ENCODE measurements at regions of chr5 and their contacts with region 1.

Region 1: DNA sequence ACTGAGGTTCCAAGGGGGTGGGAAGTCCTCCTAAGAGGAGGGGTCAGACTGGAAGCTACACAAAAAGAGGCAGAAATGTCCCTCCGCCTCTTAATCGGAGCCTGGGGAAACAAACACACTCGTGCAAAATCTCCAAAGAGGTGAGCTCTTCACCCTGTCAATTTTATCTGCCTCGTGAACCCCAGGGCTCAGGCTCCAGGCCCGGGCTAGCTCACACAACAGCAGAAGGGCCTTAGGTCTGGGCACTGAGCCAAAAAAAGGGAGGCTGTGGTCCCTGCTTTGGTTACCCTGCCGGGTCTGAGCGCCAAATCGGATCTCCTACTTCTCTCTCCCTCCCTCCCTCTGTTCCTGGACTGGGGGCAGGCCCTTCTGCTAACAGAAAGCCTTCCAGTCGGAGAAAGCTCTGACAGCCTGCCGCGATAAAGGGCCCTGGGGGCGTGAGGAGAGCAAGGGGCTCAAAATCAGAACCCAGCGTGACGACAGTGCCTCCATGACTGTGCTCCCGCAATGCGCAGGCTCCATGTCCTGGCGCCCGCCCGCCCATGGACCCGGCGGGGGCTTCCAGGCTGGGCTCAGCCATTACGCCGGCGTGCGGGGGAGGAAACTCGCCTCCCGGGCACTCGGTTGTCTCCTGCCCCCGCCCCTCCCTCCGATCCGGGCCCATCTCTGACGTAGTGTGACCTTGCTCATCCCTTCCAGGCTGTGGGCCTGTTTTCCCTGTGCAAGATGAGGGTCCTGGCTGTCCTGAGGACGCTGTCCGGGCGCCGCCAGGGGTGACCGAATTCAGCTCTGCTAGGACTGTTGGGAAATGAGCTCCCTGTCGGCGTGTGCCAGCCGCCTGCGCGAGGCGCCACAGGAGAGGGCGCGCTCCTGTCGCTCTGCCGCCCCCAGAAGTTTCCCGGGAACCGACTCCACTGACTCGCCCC is 865 bp upstream of the SLC22A4 start:
- DNase-seq: peak; percentile 76

Region 2: DNA sequence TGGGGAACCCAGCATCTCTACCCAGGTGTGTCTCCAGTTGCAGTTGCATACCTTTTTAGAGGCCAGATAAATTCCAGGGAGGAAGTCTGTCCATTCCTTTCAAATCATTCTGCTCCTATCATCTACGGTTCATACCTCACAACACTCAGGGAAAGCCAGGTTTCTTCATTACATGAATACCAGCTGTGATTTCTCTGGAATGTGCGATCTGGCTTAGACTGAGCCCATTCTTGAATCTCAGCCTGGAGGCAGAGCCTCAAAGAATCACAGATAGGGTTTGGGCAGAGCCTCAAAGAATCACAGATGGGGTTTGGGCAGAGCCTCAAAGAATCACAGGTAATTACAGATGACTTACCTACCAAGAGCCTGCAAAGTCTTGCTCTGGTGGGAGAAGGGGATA is 72.8 kb before region 1 on chr5:
- CTCF ChIA-PET with region 1: no interaction called
- POLR2A ChIA-PET with region 1: no interaction called
- DNase-seq: no peak

Region 3: DNA sequence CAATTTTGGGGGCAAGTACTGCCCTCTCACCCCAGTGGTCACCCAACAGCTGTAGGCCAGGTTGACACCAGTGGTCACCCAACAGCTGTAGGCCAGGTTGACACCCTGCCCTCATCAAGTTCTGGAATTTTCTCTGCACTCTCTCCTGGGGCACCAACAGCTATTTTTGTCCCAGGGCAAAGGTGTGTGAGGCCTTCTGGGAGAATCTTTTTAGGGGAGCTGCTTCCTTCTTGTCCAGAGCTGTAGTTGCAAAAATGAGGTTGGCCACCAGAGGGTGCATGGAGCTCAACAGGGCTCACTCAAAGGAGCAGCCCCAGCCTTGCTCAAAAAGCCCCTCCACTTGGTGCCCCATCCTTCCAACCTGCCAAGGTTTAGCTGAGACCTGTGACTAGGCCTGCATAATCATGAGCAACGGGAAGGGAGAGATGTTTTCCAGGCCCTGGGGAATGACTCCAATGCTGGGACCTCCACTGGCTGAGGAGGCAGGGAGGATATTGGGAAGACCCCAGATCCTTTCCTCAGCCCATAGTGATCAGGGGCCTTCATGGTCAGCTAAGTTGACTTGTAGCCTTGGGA is 55.1 kb before region 1 on chr5:
- CTCF ChIA-PET with region 1: interaction called, 14 read pairs
- POLR2A ChIA-PET with region 1: interaction called, 12 read pairs
- DNase-seq: peak; percentile 68

Region 4: DNA sequence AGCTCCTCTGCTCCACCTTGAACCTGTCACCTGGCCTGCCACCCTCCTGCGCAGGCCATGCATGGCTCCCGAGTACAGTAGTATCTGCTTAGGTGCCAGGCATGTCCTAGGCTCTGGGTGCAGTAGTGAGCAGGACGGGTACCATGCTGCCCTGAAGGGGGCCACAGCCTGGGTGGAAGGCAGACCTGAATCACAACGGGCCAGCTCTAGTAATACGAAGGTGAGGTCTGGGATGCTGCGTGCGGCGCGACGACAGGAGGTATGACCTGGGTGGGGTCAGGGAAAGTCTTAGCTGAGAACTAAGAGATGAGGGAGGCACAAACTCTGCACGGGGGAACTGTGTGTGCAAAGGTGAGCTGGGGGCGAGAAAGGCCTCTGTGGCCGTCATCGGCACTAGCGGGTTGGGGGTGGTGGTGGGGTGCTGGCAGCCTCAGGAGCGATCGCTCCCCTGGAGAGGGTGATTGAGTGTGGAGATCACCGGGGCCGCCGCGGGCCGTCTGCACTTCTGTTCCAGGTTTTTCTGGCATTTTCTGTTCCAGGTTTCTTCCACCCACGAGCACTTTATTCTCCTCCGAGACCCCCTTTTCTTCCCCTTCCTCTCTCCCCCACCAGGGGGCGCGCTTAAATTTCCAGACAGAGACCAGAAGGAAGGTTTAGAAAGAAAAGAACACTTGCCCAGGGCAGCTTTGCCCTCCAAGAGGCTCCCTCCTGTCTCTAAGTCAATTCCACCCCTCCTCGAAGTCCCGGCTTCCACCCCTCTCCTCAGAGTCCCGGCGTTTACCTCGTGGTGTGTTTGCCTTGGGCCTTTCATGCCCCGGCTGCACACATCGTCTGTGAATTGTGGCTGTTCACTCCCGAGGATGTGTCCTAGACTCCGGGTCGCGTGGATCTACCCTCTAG is 20.8 kb before region 1 on chr5:
- CTCF ChIA-PET with region 1: no interaction called
- POLR2A ChIA-PET with region 1: interaction called, 32 read pairs
- DNase-seq: peak; percentile 71

Region 5: GRCh38 chr5:132315529-132316083 is 22.3 kb after region 1 on chr5:
- CTCF ChIA-PET with region 1: no interaction called
- POLR2A ChIA-PET with region 1: interaction called, 15 read pairs
- DNase-seq: no peak

Region 6: GRCh38 chr5:132342291-132343180 is 49.2 kb after region 1 on chr5:
- CTCF ChIA-PET with region 1: no interaction called
- POLR2A ChIA-PET with region 1: no interaction called
- DNase-seq: no peak

Region 7: DNA sequence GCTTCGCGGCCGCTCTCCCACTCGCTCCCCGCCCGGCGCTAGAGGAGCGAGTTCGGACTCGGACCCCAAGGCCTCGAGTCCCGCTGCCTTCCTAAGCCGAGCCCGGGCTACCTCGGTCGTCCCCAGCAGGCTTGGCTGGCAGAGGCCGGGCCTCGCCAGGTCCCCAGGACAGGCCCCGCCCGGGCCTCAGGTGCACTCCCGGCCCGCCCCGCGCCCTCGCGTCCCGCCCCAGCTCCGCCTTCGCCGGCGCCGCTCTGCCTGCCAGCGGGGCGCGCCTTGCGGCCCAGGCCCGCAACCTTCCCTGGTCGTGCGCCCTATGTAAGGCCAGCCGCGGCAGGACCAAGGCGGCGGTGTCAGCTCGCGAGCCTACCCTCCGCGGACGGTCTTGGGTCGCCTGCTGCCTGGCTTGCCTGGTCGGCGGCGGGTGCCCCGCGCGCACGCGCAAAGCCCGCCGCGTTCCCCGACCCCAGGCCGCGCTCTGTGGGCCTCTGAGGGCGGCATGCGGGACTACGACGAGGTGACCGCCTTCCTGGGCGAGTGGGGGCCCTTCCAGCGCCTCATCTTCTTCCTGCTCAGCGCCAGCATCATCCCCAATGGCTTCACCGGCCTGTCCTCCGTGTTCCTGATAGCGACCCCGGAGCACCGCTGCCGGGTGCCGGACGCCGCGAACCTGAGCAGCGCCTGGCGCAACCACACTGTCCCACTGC is 76.3 kb after region 1 on chr5 and contains the start of gene SLC22A5:
- CTCF ChIA-PET with region 1: interaction called, 4 read pairs
- POLR2A ChIA-PET with region 1: interaction called, 57 read pairs
- DNase-seq: peak; percentile 79

Region 8: DNA sequence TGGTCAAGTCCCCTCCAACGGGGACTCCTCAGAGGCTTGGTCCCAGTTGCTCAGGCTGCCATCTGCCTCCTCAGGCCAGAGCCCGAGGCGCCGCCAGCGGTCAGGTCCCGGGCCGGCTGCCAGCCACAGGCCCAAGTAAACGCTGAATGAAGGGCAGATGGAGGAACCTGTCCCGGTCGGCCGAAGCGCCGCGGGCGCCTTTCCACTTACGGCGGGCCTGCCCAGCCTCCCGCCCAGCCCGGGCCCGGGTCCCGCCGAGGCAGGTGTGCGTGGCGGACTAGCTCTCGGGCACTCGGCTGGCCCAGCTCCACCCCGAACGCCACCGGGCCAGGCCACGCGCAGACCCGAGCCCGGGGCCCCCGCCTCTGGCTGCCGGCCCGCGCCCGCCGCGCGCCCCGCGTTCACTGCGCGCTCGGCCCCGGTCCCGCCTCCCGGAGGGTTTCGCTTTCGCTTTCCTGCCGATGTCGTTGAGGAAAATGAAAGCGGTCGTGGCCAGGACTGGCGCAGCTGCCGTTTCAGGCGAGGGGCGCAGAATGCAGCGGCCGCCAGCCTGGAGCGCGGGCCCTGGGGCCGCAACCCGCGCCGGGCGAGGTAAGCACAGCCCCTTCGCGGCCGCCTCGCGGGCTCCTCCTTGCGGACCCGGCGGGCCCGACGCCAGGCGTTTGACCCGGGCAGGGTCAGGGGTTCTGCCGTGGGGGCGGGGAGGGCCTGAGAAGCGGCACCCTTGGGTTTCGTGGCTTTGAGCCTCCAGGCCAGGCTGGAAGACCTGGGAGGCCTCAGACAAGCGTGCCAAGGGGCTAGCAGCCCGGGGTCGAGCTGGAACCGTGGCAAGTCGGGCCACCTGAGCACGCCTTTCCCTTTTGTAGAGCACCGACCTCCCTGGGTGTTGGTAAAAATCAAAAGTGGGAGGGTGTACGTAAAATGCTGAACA is 117.4 kb after region 1 on chr5:
- CTCF ChIA-PET with region 1: no interaction called
- POLR2A ChIA-PET with region 1: interaction called, 14 read pairs
- DNase-seq: peak; percentile 86

Region 9: DNA sequence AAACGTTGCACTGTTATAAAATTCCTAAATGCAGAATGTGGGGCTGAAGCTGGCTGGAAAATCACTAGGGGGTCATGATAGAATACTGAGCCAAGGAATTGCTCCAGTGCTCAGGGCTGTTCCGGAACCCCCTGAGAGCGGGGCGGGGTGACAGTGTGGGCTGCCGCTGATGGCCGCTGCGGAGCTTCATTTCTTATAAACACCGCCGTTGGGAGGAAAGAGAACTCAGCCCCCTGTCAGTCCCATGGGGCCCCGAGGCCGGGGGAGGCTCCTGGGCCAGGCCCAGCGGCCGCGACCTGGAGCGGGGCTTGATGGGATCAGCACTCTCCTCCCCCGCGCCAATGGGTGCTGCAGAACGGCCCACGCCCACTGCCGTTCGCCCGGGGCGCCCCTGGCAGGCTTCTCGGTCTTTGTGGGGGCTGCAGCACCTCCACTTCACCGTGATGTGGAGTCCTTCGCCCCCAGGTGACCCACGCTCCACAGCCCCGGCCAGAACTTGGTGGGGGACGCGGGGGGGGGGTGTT is 202.4 kb after region 1 on chr5:
- CTCF ChIA-PET with region 1: interaction called, 4 read pairs
- POLR2A ChIA-PET with region 1: interaction called, 25 read pairs
- DNase-seq: peak; percentile 54

Region 10: GRCh38 chr5:132662925-132663770 is 369.8 kb after region 1 on chr5:
- CTCF ChIA-PET with region 1: no interaction called
- POLR2A ChIA-PET with region 1: no interaction called
- DNase-seq: peak; percentile 46

Measured in HEK293T (cell line).